Activated CD8-positive, alpha-beta T cell treated with anti-CD3 and anti-CD28 coated beads, Interleukin-2, amount 10 ng/mL, durations not matched to agents 7 days and 5 days (primary cell): ENCODE measurements at regions of chr5 and their contacts with region 1.

Region 1: GRCh38 chr5:14399054-14399692 is 182.4 kb upstream of the OTULINL start:
- DNase-seq: peak; percentile 62
- ATAC-seq: peak; percentile 57
- H3K4me3 Mint-ChIP-seq: no peak overlapping the region
- H3K27ac Mint-ChIP-seq: no peak overlapping the region
- H3K4me1 Mint-ChIP-seq: peaks cover 55% of the 10 kb centered on the region
- H3K27me3 Mint-ChIP-seq: peaks cover 3% of the 10 kb centered on the region

Region 2: DNA sequence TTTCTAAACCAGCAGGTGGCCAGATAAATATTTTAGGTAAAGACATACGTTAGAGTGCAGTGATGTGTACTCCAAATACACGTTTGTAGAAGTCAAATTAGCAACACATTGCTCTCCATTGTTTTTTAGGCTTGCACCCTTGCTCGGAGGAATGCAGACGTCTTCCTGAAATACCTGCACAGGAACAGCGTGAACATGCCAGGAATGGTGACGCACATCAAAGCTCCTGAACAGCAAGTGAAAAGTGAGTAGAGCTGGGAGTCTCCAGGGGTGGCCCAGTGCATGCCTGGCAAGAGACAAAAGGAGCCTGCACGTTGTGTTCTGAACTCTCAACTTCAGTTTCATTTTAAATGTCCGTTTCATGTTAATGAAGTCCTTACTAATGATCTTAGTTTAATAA is 25.1 kb before region 1 on chr5:
- CTCF ChIA-PET with region 1: interaction called, 11 read pairs
- POLR2A ChIA-PET with region 1: no interaction called
- DNase-seq: no peak
- ATAC-seq: no peak
- H3K4me3 Mint-ChIP-seq: no peak overlapping the region
- H3K27ac Mint-ChIP-seq: no peak overlapping the region
- H3K4me1 Mint-ChIP-seq: peaks cover 21% of the 10 kb centered on the region
- H3K27me3 Mint-ChIP-seq: peaks cover 3% of the 10 kb centered on the region

Region 3: GRCh38 chr5:14383923-14384322 is 15.2 kb before region 1 on chr5:
- CTCF ChIA-PET with region 1: interaction called, 10 read pairs
- POLR2A ChIA-PET with region 1: no interaction called
- DNase-seq: no peak
- ATAC-seq: no peak
- H3K4me3 Mint-ChIP-seq: no peak overlapping the region
- H3K27ac Mint-ChIP-seq: no peak overlapping the region
- H3K4me1 Mint-ChIP-seq: peaks cover 14% of the 10 kb centered on the region
- H3K27me3 Mint-ChIP-seq: peaks cover 5% of the 10 kb centered on the region

Region 4: DNA sequence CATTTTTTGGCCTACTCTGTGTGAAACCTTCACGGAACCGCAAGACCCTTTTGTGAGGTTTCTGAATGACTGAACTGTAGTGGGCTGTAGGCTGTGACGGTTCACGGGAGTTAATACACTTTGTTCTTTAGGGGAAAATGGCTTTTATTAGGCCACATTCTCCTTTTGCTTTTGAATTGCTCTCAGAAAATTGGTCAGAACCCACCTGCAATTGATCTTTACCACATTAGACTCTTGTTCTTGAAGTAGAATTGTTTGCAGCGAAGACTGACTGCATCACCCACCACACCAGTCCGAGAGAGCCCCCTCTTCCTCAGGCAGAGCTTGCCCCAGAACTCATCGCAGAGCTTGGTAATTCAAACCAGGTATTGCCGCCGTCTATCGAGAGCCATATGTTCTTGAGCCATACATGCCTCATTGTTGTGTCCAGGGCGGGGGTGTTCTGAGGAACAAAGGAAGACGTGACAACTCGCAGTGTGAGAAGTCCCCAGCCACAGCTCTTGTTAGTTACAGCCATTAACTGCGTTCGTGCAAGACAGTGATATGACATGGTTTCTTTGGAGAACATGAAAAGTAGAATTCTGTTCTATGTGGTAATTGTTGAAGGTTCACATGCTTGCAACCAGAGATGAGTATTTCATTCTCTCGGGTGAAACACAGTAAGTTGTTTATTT is 16.0 kb after region 1 on chr5:
- CTCF ChIA-PET with region 1: interaction called, 44 read pairs
- POLR2A ChIA-PET with region 1: interaction called, 10 read pairs
- DNase-seq: peak; percentile 60
- ATAC-seq: peak; percentile 59
- H3K4me3 Mint-ChIP-seq: peak overlapping the region; percentile 71
- H3K27ac Mint-ChIP-seq: peak overlapping the region; percentile 94
- H3K4me1 Mint-ChIP-seq: peaks cover 63% of the 10 kb centered on the region
- H3K27me3 Mint-ChIP-seq: no peaks in the 10 kb centered on the region

Region 5: DNA sequence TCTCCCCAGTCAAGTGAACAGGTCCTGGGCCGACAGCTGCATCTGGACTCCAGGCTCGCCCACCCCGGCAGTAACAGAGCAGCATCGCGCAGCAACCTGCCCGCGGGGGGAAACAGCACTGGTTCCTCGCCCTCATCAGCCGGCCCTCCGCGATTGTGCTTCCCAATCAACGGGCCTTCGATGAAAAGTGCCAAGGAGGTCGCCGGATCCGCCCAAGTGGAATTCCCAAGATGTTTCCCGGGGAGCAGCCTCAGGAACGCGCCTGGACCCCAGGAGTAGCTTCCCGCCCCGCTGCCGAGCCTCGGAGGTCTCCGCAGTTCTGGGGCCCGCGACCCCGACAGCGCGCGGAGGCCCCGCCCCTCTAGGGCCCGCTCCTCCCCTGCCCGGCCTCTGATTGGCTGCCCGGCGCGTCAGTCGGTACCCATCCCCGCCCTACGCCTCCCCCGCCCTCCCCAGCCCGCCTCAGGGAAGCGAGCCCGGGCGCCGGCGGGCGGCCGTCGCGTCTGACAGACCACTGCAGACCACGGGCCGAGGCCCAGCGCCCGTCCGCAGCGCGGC is 182.2 kb after region 1 on chr5 and contains the start of gene OTULINL:
- CTCF ChIA-PET with region 1: interaction called, 12 read pairs
- POLR2A ChIA-PET with region 1: interaction called, 3 read pairs
- DNase-seq: peak; percentile 91
- ATAC-seq: peak; percentile 91
- H3K4me3 Mint-ChIP-seq: peak within 1 kb of the TSS; percentile 84
- H3K27ac Mint-ChIP-seq: peak within 1 kb of the TSS; percentile 87
- H3K4me1 Mint-ChIP-seq: peaks cover 43% of the 10 kb centered on the region
- H3K27me3 Mint-ChIP-seq: peaks cover 15% of the 10 kb centered on the region
- total RNA-seq, gene OTULINL: 59.6 to 68.3 TPM

Region 6: DNA sequence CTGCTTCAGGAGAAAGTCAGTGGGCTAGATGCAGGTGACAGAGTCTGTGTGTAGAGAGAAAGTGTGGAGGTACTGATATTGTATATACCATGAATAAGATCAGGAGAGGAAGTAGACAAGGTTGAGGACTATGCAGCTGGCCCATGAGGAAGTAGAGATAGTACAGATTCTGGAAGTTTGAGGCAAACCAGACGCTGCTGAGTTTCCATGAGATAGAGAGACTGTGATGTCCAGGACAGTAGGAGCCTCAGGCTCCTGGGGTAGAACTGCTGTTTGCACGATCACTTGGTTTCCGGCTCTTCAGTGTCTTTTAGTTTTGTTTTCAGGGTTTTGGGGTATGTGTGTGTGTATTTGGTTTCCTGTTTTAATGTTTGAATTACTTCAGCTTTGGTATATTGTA is 196.0 kb after region 1 on chr5:
- CTCF ChIA-PET with region 1: interaction called, 13 read pairs
- POLR2A ChIA-PET with region 1: interaction called, 3 read pairs
- DNase-seq: peak; percentile 75
- ATAC-seq: peak; percentile 79
- H3K4me3 Mint-ChIP-seq: peak overlapping the region; percentile 66
- H3K27ac Mint-ChIP-seq: peak overlapping the region; percentile 97
- H3K4me1 Mint-ChIP-seq: peaks cover 91% of the 10 kb centered on the region
- H3K27me3 Mint-ChIP-seq: no peaks in the 10 kb centered on the region

Region 7: DNA sequence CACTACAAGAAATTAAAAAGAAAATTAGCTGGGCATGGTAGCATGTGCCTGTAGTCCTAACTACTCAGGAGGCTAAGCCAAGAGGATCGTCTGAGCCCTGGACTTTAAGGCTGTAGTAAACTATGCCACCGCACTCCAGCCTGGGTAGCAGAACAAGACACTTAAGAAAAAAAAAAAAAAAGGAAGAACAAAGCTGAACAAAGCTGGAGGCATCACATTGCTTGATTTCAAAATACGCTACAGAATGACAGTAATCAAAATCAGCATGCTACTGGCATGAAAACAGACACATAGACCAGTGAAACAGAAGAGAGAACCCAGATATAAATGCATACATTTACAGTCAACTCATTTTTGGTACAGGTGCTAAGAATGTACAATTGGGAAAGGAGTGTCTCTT is 250.9 kb after region 1 on chr5:
- CTCF ChIA-PET with region 1: interaction called, 127 read pairs
- POLR2A ChIA-PET with region 1: no interaction called
- DNase-seq: no peak
- ATAC-seq: no peak
- H3K4me3 Mint-ChIP-seq: no peak overlapping the region
- H3K27ac Mint-ChIP-seq: no peak overlapping the region
- H3K4me1 Mint-ChIP-seq: peaks cover 16% of the 10 kb centered on the region
- H3K27me3 Mint-ChIP-seq: peaks cover 25% of the 10 kb centered on the region